Aorta (tissue), 5 donors: ENCODE measurements at regions of chr5 and their contacts with region 1.

Region 1: GRCh38 chr5:151115274-151115905 is 34.6 kb upstream of the TNIP1 start:
- DNase-seq: peak; percentile 79 to 92
- ATAC-seq: peak; percentile 89
- H3K4me3 ChIP-seq: no peak overlapping the region
- H3K27ac ChIP-seq: no peak overlapping the region
- H3K4me1 ChIP-seq: no peaks in the 10 kb centered on the region
- H3K27me3 ChIP-seq: no peaks in the 10 kb centered on the region

Region 2: DNA sequence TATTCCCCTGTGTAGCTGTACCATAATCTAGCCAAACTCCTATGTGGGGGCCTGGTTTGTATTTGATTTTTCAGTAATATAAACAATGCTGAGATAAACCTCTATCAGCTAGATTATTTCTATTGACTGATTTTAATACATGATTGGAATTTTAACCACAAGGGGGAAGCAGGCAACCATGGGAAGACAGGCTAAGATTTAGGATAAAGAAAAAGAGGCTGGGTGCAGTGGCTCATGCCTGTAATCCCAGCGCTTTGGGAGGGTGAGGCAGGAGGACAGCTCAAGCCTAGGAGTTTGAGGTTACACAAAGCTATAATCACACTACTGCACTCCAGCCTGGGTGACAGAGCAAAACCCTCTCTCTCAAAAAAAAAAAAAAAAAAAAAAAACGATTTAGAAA is 113.1 kb before region 1 on chr5:
- intact Hi-C with region 1: loop called (anchors 2 to 5 kb)
- DNase-seq: no peak
- ATAC-seq: no peak
- H3K4me3 ChIP-seq: no peak overlapping the region
- H3K27ac ChIP-seq: no peak overlapping the region
- H3K4me1 ChIP-seq: peaks cover 0 to 3% of the 10 kb centered on the region in 2 donors
- H3K27me3 ChIP-seq: no peaks in the 10 kb centered on the region

Region 3: DNA sequence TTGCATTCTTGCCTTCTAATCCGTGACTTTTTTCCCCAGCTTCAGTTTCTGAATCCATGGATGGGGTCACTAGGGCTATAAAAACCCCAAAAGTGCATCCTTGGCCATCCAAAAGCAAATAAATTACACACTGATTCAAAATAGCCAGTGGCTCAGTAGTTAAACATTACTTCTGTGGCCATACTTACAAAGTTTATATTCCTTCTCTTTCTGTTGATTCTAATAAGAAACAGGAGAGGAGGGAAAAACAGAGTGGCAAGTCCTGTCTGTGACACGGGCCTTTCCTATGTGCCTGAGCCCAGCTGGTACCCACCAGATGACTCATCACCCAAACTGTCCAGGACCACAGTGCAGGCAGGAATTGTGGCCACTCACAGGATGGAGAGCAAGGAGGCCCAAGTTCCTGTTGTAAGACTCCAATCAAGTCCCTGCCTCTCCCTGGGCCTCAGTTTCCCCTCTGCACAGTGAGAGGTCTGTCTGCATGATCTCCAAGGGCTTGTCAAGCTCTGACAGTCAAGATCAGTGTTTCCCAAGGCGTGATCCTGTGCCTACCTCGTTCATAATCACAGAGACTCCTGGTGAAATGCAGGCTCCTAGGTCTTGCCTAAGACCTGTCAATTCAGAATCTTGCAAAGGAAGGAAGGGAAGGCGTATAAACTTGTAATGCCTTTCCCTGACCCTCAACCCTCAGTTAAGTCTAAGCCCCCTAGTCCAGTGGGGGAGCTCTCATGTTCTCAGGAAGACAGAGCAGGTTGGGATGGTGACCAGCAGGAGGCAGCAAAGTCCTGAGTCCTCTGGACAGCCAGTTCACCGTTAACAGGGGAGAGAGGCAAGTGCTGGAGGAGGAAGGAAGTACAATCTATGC is 64.1 kb before region 1 on chr5:
- intact Hi-C with region 1: loop called (anchors 1 to 2 kb)
- DNase-seq: peak; percentile 89 to 93
- ATAC-seq: peak; percentile 86
- H3K4me3 ChIP-seq: no peak overlapping the region
- H3K27ac ChIP-seq: no peak overlapping the region
- H3K4me1 ChIP-seq: no peaks in the 10 kb centered on the region
- H3K27me3 ChIP-seq: no peaks in the 10 kb centered on the region

Region 4: GRCh38 chr5:151663617-151664293 is 548.4 kb after region 1 on chr5:
- intact Hi-C with region 1: no loop called
- DNase-seq: peak in 1 of 2 donors; percentile 65
- ATAC-seq: peak; percentile 48
- H3K4me3 ChIP-seq: no peak overlapping the region
- H3K27ac ChIP-seq: peak overlapping the region; percentile 53 to 80
- H3K4me1 ChIP-seq: peaks cover 0 to 4% of the 10 kb centered on the region in 2 donors
- H3K27me3 ChIP-seq: no peaks in the 10 kb centered on the region